GM13977 (cell line): ENCODE measurements at regions of chr21 and their contacts with region 1.

Region 1: DNA sequence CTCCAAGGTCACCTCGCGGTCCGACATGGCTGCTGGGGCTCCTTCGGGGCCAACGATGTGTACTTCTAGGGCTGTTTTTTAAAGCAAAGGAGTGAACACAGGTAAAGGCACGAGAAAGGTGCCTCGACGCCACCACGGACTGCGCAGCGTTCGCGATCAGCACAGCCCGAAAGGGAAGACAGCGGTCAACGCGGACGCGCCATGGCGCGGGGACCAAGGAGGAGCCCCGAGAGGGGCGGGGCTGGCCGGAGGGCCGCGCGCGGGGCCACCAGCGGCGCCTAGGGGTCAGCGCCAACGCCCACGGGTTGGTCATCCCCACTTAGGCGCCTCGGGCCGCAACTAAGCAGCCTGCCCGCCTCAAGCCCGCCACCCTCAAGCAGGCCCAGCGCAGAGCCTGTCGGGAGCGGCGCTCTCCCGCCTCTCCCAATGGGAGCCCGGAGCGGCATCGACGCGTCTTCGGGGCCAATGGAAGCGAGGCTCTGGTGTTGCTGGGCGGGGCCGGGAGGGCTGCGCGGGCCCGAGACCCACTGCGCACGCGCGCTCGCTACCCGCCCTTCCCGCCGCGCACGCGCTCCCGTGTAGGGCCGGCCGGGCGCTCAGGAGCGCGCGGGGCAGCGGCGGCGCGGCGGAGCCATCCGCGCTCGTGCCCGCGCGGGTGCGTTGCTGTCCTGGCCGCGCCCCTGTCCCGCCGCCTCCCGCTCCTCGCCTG is at the start of gene DIP2A:
- DNase-seq: peak; percentile 100
- CTCF ChIP-seq: no peak

Region 2: DNA sequence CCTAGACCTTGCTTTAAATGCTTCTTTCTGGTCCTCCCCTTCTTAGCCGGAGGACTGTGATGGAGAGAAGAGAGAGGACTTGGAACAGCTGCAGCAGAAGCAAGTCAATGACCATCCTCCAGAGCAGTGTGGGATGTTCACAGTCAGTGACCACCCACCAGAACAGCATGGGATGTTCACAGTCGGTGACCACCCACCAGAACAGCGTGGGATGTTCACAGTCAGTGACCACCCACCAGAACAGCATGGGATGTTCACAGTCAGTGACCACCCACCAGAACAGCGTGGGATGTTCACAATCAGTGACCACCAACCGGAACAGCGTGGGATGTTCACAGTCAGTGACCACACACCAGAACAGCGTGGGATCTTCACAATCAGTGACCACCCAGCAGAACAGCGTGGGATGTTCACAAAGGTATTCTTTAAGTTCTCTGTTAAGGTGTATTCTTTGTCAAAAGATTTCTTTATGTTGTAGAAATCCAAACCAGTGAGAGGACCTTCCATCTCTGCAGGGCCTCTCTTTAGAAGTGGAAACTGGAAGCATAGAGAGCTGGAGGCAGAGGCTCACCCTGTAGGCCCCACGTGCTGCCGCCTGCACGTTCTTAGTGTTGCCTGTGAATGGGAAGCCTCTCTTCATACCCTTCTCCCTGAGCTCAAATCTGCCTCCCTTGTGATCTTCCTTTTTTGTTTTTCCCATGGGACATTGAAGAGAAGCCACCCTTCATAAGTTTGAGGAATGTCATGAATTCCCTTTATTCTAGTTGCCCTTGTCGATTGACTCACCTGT is 123.9 kb before region 1 on chr21:
- in situ Hi-C with region 1: no loop called
- DNase-seq: no peak
- CTCF ChIP-seq: no peak

Region 3: GRCh38 chr21:46409641-46410406 is 48.6 kb before region 1 on chr21:
- in situ Hi-C with region 1: loop called (anchors 5 kb)
- DNase-seq: no peak
- CTCF ChIP-seq: no peak

Region 4: DNA sequence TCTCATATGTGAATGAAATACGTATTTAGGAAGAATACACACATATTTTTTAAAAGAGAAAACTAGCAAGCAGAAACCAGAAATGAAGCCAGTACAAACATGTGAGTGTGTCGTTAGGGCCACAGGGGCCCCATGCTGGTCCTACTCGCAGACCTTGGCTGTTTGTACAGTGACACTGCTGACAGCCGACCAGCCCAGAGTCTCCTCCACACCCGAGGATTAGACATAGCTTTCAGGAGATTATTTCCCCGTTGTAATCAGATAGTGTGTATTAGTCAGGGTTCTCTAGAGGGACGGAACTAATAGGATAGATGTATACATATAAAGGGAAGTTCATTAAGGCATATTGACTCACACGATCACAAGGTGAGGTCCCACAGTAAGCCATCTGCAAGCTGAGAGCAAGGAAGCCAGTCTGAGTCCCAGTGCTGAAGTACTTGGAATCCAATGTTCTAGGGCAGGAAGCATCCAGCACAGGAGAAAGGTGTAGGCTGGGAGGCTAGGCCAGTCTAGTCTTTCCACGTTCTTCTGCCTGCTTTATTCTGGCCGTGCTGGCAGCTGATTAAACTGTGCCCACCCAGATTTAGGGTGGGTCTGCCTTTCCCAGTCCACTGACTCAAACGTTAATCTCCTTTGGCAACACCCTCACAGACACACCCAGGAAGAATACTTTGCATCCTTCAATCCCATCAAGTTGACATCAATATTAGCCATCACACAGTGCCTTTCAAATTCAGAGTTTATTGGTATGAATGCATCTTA is 51.5 kb after region 1 on chr21:
- in situ Hi-C with region 1: no loop called
- DNase-seq: no peak
- CTCF ChIP-seq: no peak